IMR-90 (cell line): ENCODE measurements at regions of chr14 and their contacts with region 1.

Region 1: DNA sequence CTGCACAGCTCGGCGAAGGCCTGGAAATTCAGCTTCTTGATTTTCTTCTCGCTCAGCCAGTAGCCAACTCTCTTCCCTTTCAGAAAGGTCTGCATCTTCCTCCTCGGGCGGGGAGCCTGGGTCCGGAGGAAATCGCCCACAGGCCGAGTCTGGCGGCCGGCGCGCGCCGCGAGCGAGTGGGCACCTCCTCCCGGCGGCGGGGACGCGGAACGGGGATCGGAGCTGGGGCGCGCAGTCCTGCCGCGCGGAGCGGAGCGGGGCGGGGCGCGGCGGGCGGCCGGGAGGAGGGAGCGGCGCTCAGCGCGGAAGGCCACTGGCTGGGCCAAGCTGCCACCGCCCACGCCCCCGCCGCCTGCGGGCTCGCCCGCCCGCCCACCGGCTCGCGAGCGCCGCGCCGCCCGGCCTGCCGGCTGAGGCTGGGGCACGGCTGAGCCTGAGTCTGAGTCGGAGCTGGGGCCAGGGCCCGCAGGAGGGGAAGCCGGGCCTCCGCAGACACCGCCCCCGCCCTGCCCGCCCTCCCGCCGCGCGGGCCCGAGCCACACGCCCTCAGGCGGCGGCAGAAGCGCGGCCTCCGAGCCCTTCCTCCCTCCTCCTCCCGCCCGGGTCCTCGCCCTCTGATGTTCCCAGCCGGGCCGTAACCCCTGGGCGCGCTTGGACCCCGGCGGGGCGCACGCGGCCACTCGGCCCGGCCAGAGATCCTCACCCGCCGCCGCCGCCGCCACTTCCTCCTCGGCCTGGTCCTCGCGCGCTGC is 480 bp downstream of the ITPK1 start:
- DNase-seq: peak; percentile 78
- ATAC-seq: peak; percentile 92
- H3K4me3 ChIP-seq: peak overlapping the region; percentile 81
- H3K27ac ChIP-seq: peak overlapping the region; percentile 71; the same call in 1 of the 2 replicates
- H3K4me1 ChIP-seq: peaks cover 13% of the 10 kb centered on the region
- H3K27me3 ChIP-seq: no peaks in the 10 kb centered on the region
- CTCF ChIP-seq: no peak
- POLR2A ChIP-seq: no peak
- RAD21 ChIP-seq: no peak

Region 2: DNA sequence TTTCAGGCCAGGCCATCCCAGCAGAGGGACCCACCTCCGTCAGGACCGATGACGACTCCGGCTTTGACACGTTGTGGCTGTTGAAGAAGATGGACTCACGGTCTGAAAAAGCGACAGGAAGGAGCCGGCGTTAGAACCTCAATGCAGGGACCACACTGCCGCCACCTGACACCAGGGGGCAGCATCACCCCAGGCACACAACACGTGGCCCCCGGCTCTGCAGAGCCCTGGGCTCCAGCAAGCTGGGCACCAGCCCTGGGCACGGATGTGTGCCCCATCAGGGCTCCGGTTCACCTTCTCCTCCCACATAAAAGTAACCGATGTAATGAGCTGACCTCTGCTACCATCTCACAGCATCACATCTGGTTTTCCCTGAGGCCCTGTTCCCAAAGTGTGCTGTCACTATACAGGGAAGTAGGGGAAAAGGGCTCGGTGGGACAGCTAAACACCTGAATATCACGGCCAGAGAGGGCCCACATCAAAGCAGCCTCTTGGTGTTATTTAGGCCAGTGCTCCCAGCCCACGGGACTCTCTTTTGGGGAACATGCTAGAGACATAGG is 163.3 kb before region 1 on chr14:
- CTCF ChIA-PET with region 1: interaction called, 11 read pairs
- POLR2A ChIA-PET with region 1: no interaction called
- dilution Hi-C with region 1: no loop called
- in situ Hi-C with region 1: no loop called
- intact Hi-C with region 1: loop called (anchors 1 kb)
- DNase-seq: peak; percentile 48
- ATAC-seq: peak; percentile 99
- H3K4me3 ChIP-seq: no peak overlapping the region
- H3K27ac ChIP-seq: no peak overlapping the region
- H3K4me1 ChIP-seq: no peaks in the 10 kb centered on the region
- H3K27me3 ChIP-seq: no peaks in the 10 kb centered on the region
- CTCF ChIP-seq: peak; percentile 97
- POLR2A ChIP-seq: 0 out of 2 replicates have a peak, but pooled peaks have one; percentile 55
- RAD21 ChIP-seq: peak; percentile 99

Region 3: DNA sequence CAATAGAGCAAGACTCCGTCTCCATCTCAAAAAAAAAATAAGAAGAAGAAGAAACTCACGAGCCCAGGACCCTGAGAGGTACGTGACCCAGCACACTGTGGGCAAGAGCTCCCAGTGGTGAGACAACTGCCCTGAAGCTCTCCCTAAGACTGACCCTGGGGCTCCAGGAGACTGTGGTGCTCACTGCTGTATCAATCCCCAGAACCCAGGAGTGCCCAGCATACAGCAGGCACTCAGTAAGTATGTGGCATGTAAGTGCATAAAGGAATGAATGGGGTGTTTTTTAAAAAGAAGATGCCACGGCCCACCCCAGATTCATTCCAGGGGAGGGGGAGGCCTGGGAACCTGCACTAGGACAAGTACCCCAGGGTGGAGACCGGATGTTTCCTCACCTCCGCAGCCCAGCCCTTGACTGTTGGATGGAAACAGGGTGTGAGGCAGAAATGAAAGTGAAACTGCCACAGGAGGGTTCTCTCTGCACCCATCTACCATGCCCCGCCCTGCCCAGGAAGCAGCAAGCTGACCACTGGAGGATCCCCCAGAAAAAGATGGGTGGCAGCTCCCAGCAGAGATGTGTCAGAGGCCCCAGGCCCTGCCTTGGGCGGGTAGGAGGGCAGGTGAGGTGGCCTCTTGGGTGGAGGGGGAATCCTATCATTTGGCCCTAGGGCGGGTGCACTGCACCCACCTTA is 11.7 kb before region 1 on chr14:
- CTCF ChIA-PET with region 1: interaction called, 10 read pairs
- POLR2A ChIA-PET with region 1: no interaction called
- dilution Hi-C with region 1: no loop called
- in situ Hi-C with region 1: no loop called
- intact Hi-C with region 1: no loop called
- DNase-seq: no peak
- ATAC-seq: peak; percentile 31; the same call in 1 of the 2 replicates
- H3K4me3 ChIP-seq: no peak overlapping the region
- H3K27ac ChIP-seq: no peak overlapping the region
- H3K4me1 ChIP-seq: peaks cover 6% of the 10 kb centered on the region
- H3K27me3 ChIP-seq: no peaks in the 10 kb centered on the region
- CTCF ChIP-seq: no peak
- POLR2A ChIP-seq: no peak
- RAD21 ChIP-seq: no peak

Region 4: GRCh38 chr14:93137864-93138263 is 22.6 kb after region 1 on chr14:
- CTCF ChIA-PET with region 1: interaction called, 20 read pairs
- POLR2A ChIA-PET with region 1: no interaction called
- dilution Hi-C with region 1: no loop called
- in situ Hi-C with region 1: no loop called
- intact Hi-C with region 1: loop called (anchors 1 kb)
- DNase-seq: peak; percentile 12
- ATAC-seq: no peak
- H3K4me3 ChIP-seq: no peak overlapping the region
- H3K27ac ChIP-seq: no peak overlapping the region
- H3K4me1 ChIP-seq: no peaks in the 10 kb centered on the region
- H3K27me3 ChIP-seq: peaks cover 9% of the 10 kb centered on the region
- CTCF ChIP-seq: no peak
- POLR2A ChIP-seq: no peak
- RAD21 ChIP-seq: 0 out of 2 replicates have a peak, but pooled peaks have one; percentile 9

Region 5: GRCh38 chr14:93184388-93185353 is 69.4 kb after region 1 on chr14 and contains the starts of genes LYSET and MOAP1:
- CTCF ChIA-PET with region 1: interaction called, 3 read pairs
- POLR2A ChIA-PET with region 1: no interaction called
- dilution Hi-C with region 1: no loop called
- in situ Hi-C with region 1: no loop called
- intact Hi-C with region 1: loop called (anchors 1 kb)
- DNase-seq: peak; percentile 79
- ATAC-seq: peak; percentile 90
- H3K4me3 ChIP-seq: peak within 1 kb of the TSS; percentile 99
- H3K27ac ChIP-seq: peak within 1 kb of the TSS; percentile 74
- H3K4me1 ChIP-seq: no peaks in the 10 kb centered on the region
- H3K27me3 ChIP-seq: no peaks in the 10 kb centered on the region
- CTCF ChIP-seq: peak; percentile 14; the same call in 1 of the 2 replicates
- POLR2A ChIP-seq: peak; percentile 87
- RAD21 ChIP-seq: no peak
- total RNA-seq, gene LYSET: 8.3 and 10.2 TPM in 2 replicates
- total RNA-seq, gene MOAP1: 9.9 and 12.8 TPM in 2 replicates

Region 6: GRCh38 chr14:93543766-93544165 is 428.5 kb after region 1 on chr14:
- CTCF ChIA-PET with region 1: no interaction called
- POLR2A ChIA-PET with region 1: no interaction called
- dilution Hi-C with region 1: no loop called
- in situ Hi-C with region 1: no loop called
- intact Hi-C with region 1: loop called (anchors 5 kb)
- DNase-seq: peak; percentile 33
- ATAC-seq: peak; percentile 54
- H3K4me3 ChIP-seq: no peak overlapping the region
- H3K27ac ChIP-seq: no peak overlapping the region
- H3K4me1 ChIP-seq: no peaks in the 10 kb centered on the region
- H3K27me3 ChIP-seq: no peaks in the 10 kb centered on the region
- CTCF ChIP-seq: peak; percentile 53
- POLR2A ChIP-seq: no peak
- RAD21 ChIP-seq: peak; percentile 53